Activated T-helper 2 cell treated with anti-CD3 and anti-CD28 coated beads, Interferon-gamma antibody, Interleukin-2, Interleukin-4, amounts not matched to agents 10 μg/mL and 5 μg/mL and 100 μg/mL, durations not matched to agents 14 hours and 24 hours and 36 hours (primary cell): ENCODE measurements at regions of chr9 and their contacts with region 1.

Region 1: DNA sequence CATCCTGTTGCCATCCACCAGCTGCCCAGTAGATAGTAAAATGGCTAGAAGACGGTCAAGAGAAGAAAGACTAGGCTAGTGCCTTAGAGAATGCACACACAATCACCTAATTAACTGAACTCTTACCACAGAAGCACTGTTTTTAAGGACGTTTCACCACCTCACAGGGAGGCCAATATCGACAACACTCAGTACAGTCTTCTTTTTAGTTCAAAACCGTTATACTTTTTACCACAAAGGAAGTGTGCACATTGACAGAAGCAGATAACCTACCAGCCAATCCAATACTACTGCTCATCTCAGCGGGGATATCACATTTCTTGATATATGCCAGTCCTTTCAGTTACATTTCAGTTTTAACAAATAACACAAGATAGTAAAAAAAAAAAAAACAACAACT is 122.3 kb downstream of the GNAQ start:
- DNase-seq: peak; percentile 41
- H3K4me3 Mint-ChIP-seq: peak overlapping the region; percentile 61
- H3K27ac Mint-ChIP-seq: peak overlapping the region; percentile 95
- H3K4me1 Mint-ChIP-seq: peaks cover 80% of the 10 kb centered on the region
- H3K27me3 Mint-ChIP-seq: no peaks in the 10 kb centered on the region

Region 2: GRCh38 chr9:77944556-77945243 is 35.4 kb after region 1 on chr9:
- intact Hi-C with region 1: loop called (anchors 5 kb)
- DNase-seq: no peak
- H3K4me3 Mint-ChIP-seq: peak overlapping the region; percentile 10
- H3K27ac Mint-ChIP-seq: no peak overlapping the region
- H3K4me1 Mint-ChIP-seq: peaks cover 44% of the 10 kb centered on the region
- H3K27me3 Mint-ChIP-seq: no peaks in the 10 kb centered on the region

Region 3: DNA sequence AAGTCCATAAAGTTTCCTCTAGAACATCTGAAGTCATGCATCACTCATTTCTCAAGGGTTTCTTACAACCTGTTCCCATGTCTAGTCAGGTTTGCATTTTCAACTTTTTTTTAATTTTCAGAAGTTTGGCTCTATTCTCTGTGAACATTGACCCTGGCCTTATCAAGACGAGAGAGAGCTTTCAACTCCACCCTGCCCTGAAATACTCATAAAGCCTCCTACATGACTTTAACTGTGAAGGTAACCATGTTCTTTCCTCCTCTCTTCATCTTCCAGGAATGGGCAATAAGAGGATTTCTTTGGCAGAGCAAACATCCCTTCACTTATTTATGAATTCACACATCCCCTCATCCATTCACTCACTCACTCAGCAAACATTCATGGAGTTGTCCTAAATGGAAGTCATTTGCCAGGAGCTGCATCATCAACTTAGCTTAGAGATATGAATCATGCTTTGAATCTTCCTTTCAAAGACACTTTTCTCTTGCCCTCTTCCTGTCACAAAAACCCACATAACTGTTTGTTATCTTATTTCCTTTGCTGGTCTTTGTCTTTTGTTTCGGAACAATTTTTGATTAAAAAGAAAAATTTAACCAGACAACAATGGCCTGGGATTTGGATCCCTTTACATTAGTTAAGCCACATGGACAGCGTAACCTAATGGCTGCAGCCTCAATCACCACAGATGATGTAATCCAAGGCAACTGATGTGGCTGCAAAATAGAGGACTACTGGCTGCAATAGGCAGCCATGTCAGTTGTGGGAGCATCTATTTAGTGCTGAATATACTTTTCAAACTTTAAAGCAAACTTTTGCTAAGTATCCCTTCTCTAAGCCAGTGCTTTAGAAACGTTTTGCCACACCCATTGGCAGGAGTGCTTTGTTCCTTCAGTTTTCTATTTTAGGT is 165.3 kb after region 1 on chr9:
- intact Hi-C with region 1: no loop called
- DNase-seq: peak; percentile 16
- H3K4me3 Mint-ChIP-seq: peak overlapping the region; percentile 22
- H3K27ac Mint-ChIP-seq: peak overlapping the region; percentile 68
- H3K4me1 Mint-ChIP-seq: peaks cover 47% of the 10 kb centered on the region
- H3K27me3 Mint-ChIP-seq: no peaks in the 10 kb centered on the region